CD14-positive monocyte (primary cell): ENCODE measurements at regions of chr3 and their contacts with region 1.

Region 1: GRCh38 chr3:49673715-49674496 is at the start of gene APEH:
- DNase-seq: peak; percentile 98 to 99 (median 99)
- H3K4me3 ChIP-seq: peak within 1 kb of the TSS; percentile 63 to 82 (median 74)
- H3K4me3 Mint-ChIP-seq: peak within 1 kb of the TSS; percentile 84 to 91
- H3K27ac ChIP-seq: peak within 1 kb of the TSS; percentile 96 to 97
- H3K27ac Mint-ChIP-seq: peak within 1 kb of the TSS; percentile 93 to 99 (median 98)
- H3K4me1 ChIP-seq: peaks cover 17 to 21% of the 10 kb centered on the region in 2 donors
- H3K4me1 Mint-ChIP-seq: peaks cover 28% of the 10 kb centered on the region
- H3K27me3 ChIP-seq: no peaks in the 10 kb centered on the region
- H3K27me3 Mint-ChIP-seq: peaks cover 4 to 10% (median 6%) of the 10 kb centered on the region in 3 donors
- CTCF ChIP-seq: no peak
- polyA plus RNA-seq, gene APEH: 66.1 to 105 (median 92.6) TPM

Region 2: DNA sequence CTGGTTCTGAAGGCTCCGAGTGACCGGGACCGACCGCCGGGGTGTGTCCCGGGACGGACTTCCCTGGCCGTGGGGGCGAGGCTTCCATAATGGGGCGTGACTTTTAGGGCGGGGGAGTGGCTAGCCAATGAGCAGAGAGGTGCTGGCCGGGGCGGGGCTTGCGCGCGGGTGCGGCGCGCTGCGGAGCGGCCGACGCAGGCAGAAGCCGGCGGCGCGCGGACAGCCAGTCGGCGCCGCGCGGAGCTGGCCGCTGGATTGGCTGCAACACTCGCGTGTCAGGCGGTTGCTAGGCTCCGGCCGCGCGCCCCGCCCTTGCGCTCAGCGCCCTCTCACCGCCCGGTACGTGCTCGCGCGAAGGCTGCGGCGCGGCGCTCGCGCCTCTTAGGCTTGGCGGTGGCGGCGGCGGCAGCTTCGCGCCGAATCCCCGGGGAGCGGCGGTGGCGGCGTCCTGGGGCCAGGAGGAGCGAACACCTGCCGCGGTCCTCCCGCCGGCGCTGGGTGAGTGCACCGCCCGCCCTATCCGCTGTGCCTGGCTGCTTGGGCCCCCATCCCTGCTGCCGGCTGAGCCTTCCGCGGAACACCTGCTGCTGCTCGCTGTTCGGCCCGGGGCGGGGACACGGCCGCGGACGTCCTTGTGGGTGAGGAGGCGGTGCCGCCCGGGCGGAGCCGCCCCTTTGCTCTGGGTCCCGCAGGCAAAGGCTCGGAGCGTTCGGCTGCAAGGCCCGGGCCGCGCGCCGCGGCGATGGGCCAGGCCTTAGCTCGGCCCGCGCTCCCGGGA is 203.8 kb before region 1 on chr3 and contains the start of gene DAG1:
- intact Hi-C with region 1: loop called in 1 of 2 experiments (anchors 5 kb)
- DNase-seq: peak; percentile 93 to 98 (median 95)
- H3K4me3 ChIP-seq: peak within 1 kb of the TSS; percentile 82 to 93 (median 86)
- H3K4me3 Mint-ChIP-seq: peak within 1 kb of the TSS; percentile 85 to 92
- H3K27ac ChIP-seq: peak within 1 kb of the TSS; percentile 82 to 90
- H3K27ac Mint-ChIP-seq: peak within 1 kb of the TSS; percentile 93 to 96 (median 95)
- H3K4me1 ChIP-seq: peaks cover 26 to 38% of the 10 kb centered on the region in 2 donors
- H3K4me1 Mint-ChIP-seq: peaks cover 34% of the 10 kb centered on the region
- H3K27me3 ChIP-seq: no peaks in the 10 kb centered on the region
- H3K27me3 Mint-ChIP-seq: peaks cover 20 to 34% (median 25%) of the 10 kb centered on the region in 3 donors
- CTCF ChIP-seq: no peak
- polyA plus RNA-seq, gene DAG1: 3.9 to 5.8 (median 4.2) TPM

Region 3: GRCh38 chr3:49539659-49540560 is 134.0 kb before region 1 on chr3:
- intact Hi-C with region 1: loop called (anchors 1 to 5 kb)
- DNase-seq: peak; percentile 91 to 96 (median 93)
- H3K4me3 ChIP-seq: peak overlapping the region; percentile 47 to 77 (median 57)
- H3K4me3 Mint-ChIP-seq: peak overlapping the region; percentile 78 to 88
- H3K27ac ChIP-seq: peak overlapping the region; percentile 55 to 63
- H3K27ac Mint-ChIP-seq: peak overlapping the region in 5 of 7 donors; percentile 25 to 82 (median 72)
- H3K4me1 ChIP-seq: peaks cover 8 to 10% of the 10 kb centered on the region in 2 donors
- H3K4me1 Mint-ChIP-seq: peaks cover 8% of the 10 kb centered on the region
- H3K27me3 ChIP-seq: no peaks in the 10 kb centered on the region
- H3K27me3 Mint-ChIP-seq: peaks cover 2 to 10% (median 8%) of the 10 kb centered on the region in 3 donors
- CTCF ChIP-seq: peak; percentile 87

Region 4: GRCh38 chr3:49723628-49724551 is 50.0 kb after region 1 on chr3 and contains the start of gene GMPPB:
- intact Hi-C with region 1: loop called (anchors 10 kb)
- DNase-seq: peak; percentile 95 to 98 (median 96)
- H3K4me3 ChIP-seq: peak within 1 kb of the TSS; percentile 82 to 88 (median 82)
- H3K4me3 Mint-ChIP-seq: peak within 1 kb of the TSS; percentile 87 to 95
- H3K27ac ChIP-seq: peak within 1 kb of the TSS; percentile 77 to 97
- H3K27ac Mint-ChIP-seq: peak within 1 kb of the TSS; percentile 92 to 97 (median 96)
- H3K4me1 ChIP-seq: peaks cover 28 to 38% of the 10 kb centered on the region in 2 donors
- H3K4me1 Mint-ChIP-seq: peaks cover 30% of the 10 kb centered on the region
- H3K27me3 ChIP-seq: peaks cover 0 to 1% of the 10 kb centered on the region in 2 donors
- H3K27me3 Mint-ChIP-seq: peaks cover 0 to 4% (median 2%) of the 10 kb centered on the region in 3 donors
- CTCF ChIP-seq: no peak
- polyA plus RNA-seq, gene GMPPB: 14.7 to 17.6 (median 17.6) TPM